Endothelial cell of umbilical vein (primary cell): ENCODE measurements at regions of chr19 and their contacts with region 1.

Region 1: GRCh38 chr19:15432629-15433518 is 14.1 kb upstream of the AKAP8L start:
- DNase-seq: peak; percentile 88
- H3K4me3 ChIP-seq: peak overlapping the region; percentile 52 to 77 (median 71)
- H3K27ac ChIP-seq: peak overlapping the region; percentile 25
- H3K4me1 ChIP-seq: peaks cover 12% of the 10 kb centered on the region
- H3K27me3 ChIP-seq: no peaks in the 10 kb centered on the region
- CTCF ChIP-seq: no peak
- POLR2A ChIP-seq: peak; percentile 75

Region 2: GRCh38 chr19:15443325-15443724 is 10.5 kb after region 1 on chr19:
- CTCF ChIA-PET with region 1: no interaction called
- POLR2A ChIA-PET with region 1: no interaction called
- dilution Hi-C with region 1: no loop called
- intact Hi-C with region 1: no loop called
- DNase-seq: no peak
- H3K4me3 ChIP-seq: no peak overlapping the region
- H3K27ac ChIP-seq: no peak overlapping the region
- H3K4me1 ChIP-seq: no peaks in the 10 kb centered on the region
- H3K27me3 ChIP-seq: no peaks in the 10 kb centered on the region
- CTCF ChIP-seq: no peak
- POLR2A ChIP-seq: no peak

Region 3: GRCh38 chr19:15466851-15467733 is 34.2 kb after region 1 on chr19:
- CTCF ChIA-PET with region 1: no interaction called
- POLR2A ChIA-PET with region 1: no interaction called
- dilution Hi-C with region 1: no loop called
- intact Hi-C with region 1: loop called (anchors 1 kb)
- DNase-seq: peak; percentile 99
- H3K4me3 ChIP-seq: no peak overlapping the region
- H3K27ac ChIP-seq: peak overlapping the region; percentile 41
- H3K4me1 ChIP-seq: peaks cover 39% of the 10 kb centered on the region
- H3K27me3 ChIP-seq: peaks cover 0 to 2% of the 10 kb centered on the region in 2 experiments
- CTCF ChIP-seq: no peak
- POLR2A ChIP-seq: peak; percentile 45